AG04449 (cell line): ENCODE measurements at regions of chr1 and their contacts with region 1.

Region 1: GRCh38 chr1:983799-984473 is 2.0 kb upstream of the PERM1 start:
- DNase-seq: no peak
- H3K4me3 ChIP-seq: peak overlapping the region; percentile 40
- CTCF ChIP-seq: peak; percentile 91

Region 2: GRCh38 chr1:921011-921837 is 62.7 kb before region 1 on chr1:
- CTCF ChIA-PET with region 1: no interaction called
- POLR2A ChIA-PET with region 1: no interaction called
- DNase-seq: no peak
- H3K4me3 ChIP-seq: no peak overlapping the region
- CTCF ChIP-seq: peak; percentile 53

Region 3: DNA sequence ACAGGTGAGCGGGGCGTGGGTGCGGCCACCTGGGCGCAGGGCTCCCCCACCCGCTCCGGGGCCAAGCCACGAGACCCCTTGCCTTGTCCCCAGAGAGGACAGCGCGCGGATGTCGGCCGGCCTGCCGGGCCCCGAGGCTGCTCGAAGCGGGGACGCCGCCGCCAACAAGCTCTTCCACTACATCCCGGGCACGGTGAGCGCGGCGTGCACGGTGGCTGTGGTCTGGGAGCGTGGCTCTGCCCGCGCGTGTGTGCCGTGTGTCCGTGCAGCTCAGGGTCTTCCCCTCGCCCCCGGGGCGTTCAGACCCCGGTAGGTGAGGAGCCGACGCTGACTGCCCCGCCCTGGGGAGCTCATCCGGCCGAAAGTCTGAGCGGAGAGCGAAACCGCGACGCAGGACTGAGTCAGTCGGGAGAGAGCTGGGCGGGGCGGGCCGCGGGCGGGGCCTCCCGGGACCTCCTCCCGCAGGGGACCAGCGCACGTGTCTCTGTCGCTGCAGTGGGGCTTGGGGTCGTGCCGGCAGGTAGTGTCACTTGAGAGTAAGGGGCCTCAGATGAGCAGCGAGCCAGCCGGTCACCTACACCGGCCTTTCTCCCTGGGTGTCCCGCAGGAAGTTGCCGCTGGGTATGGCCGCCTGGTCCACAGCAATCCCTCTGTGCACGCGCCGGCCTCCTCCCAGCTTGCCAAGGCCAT is 17.2 kb before region 1 on chr1:
- CTCF ChIA-PET with region 1: interaction called, 27 read pairs
- POLR2A ChIA-PET with region 1: no interaction called
- DNase-seq: no peak
- H3K4me3 ChIP-seq: peak overlapping the region; percentile 72
- CTCF ChIP-seq: no peak

Region 4: GRCh38 chr1:999725-1000356 is 15.9 kb after region 1 on chr1 and contains the start of gene HES4:
- CTCF ChIA-PET with region 1: interaction called, 101 read pairs
- POLR2A ChIA-PET with region 1: no interaction called
- DNase-seq: peak; percentile 51
- H3K4me3 ChIP-seq: peak within 1 kb of the TSS; percentile 73
- CTCF ChIP-seq: no peak

Region 5: GRCh38 chr1:1040004-1040991 is 56.4 kb after region 1 on chr1:
- CTCF ChIA-PET with region 1: interaction called, 16 read pairs
- POLR2A ChIA-PET with region 1: no interaction called
- DNase-seq: no peak
- H3K4me3 ChIP-seq: peak overlapping the region; percentile 44
- CTCF ChIP-seq: peak; percentile 48

Region 6: DNA sequence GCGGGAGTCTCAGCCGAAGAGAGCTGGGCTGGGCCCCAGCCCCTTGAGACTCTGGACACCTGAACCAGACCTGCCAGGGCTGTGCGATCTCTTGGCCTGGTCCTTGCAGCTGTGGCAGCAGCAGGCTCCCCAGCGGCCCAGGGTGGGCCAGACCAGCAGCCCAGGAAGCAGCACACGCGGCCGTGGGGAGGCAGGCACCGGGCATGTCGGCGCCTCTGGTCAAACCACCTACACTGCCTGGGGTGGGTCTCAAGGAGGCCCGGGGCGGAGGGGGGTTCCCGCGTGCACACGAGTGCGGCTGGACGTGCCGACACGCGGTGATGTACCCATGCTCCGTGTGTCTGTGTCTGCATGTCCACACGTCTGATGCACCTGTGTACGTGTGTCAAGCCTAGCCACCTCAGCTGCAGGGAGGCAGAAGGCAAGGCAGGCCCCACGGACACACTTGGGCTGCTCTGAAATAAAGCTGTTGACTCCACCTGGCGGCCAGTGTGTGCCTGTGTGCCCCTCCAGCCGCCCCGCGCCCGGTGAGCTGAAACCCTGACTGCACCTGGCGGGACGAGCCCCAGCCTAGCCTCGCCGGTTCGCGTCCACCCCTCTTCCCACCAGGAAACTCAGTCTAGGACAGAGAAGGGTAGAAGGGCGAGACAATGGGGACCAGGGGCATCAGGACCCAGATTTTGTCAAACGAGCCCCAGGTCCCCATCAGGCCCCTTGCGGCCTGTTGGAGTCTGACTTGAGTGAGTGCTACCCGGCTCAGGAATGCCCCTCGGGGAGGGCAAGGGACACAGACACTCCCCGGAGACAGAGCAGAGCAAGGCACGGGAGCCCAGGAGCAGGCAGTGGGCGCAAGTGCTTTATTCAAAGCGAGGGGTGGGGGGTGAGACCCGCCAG is 307.9 kb after region 1 on chr1:
- CTCF ChIA-PET with region 1: interaction called, 21 read pairs
- POLR2A ChIA-PET with region 1: no interaction called
- DNase-seq: no peak
- H3K4me3 ChIP-seq: no peak overlapping the region
- CTCF ChIP-seq: peak; percentile 62